Activated naive CD4-positive, alpha-beta T cell treated with anti-CD3 and anti-CD28 coated beads, Interleukin-2, amount 10 ng/mL, durations not matched to agents 7 days and 5 days (primary cell): ENCODE measurements at regions of chr20 and their contacts with region 1.

Region 1: DNA sequence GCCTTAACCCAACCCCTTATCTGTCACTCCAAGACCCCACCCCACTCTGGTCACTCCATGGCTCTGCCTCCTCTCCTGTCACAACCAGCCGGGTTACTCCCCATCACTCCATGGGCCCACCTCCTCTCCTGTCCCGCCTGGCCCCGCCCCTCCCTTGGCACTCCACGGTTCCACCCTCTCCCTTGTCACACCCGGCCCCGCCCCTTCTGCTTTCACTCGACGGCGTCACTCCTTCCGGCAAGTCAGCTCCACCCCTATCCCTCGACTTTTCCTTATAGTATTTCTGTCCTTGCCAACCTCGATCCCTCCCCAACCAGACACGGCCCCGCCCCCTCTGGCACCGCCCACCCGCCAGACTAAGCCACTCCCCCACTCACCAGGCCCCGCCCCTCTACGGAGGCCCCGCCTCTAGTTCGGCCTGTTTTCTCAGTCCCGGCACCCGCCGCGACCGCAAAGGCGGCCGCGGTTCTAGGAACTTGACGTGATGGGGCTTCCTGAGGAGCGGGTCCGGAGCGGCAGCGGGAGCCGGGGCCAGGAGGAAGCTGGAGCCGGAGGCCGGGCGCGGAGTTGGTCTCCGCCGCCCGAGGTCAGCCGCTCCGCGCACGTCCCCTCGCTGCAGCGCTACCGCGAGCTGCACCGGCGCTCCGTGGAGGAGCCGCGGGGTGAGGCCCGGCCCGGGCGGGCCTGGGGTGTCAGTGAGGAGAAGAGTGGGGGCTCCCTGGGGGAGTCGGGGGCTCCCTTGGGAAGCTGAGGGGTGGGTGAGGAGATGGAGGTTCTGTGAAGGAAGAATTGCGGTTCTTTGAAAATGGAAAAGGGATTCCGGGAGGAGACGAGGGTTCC is at the start of gene ACSS2:
- DNase-seq: peak; percentile 100
- H3K4me3 Mint-ChIP-seq: peak within 1 kb of the TSS; percentile 95
- H3K27ac Mint-ChIP-seq: peak within 1 kb of the TSS; percentile 94
- H3K4me1 Mint-ChIP-seq: peaks cover 67% of the 10 kb centered on the region
- H3K27me3 Mint-ChIP-seq: peaks cover 12% of the 10 kb centered on the region

Region 2: DNA sequence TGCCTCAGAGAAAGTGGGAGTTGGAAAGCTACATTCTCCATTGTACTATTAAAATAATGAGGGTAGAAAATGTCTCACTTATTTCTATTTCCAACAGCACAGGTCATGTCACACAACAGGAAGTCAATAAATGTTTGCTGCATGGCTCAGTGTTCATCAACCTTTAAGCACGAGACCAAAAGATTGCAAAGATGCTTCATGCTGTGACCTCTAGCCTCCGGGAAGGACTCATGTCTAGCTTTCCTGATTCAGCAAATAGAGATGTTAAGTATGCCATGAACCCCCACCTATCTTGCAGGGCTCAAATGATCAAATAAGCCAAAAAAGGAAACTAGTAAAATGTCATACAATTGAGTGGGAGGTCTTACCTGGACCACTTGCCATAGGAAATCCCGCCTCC is 108.3 kb before region 1 on chr20:
- CTCF ChIA-PET with region 1: no interaction called
- DNase-seq: no peak
- H3K4me3 Mint-ChIP-seq: no peak overlapping the region
- H3K27ac Mint-ChIP-seq: no peak overlapping the region
- H3K4me1 Mint-ChIP-seq: no peaks in the 10 kb centered on the region
- H3K27me3 Mint-ChIP-seq: no peaks in the 10 kb centered on the region

Region 3: DNA sequence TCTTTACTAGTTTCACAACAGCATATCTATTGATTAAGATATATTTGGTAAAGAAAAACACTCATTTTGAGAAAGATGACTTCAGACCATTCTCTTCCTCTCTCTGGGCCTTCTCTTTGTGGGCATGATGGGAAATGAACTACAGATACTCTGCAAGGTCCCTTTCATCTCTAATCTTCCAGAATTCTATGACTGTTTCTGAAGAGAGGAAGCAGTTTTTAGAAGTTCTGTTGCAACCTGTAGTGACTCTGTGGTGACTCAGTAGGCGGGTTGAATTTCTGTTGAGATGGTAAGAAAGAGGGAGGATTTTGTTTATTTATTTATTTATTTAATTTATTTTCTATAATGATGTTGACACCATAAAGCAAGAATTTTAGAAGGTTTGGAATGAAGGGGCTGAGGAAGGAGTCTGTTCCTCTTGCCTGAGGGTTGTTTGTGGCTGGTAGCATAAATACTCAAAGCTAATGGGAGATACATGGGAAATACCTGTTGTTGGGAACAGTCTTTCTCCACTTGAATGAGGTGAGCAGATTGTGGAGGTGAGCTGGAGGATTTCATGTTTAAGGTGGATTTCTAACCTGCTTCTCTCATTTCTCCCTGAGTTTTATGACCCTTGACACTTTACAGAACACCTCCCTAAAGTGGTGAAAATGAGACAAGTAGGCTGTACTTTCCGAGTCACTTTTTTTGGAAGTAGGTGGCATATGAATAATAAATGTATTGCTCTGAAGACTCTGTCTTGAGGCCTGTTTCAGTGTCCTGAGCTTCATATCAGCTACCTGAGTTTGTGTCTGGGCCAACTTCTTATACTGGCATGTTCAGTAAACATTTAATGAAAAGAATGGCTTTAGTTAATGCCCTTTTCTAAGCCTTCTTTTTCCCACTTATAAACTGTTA is 15.0 kb after region 1 on chr20:
- CTCF ChIA-PET with region 1: interaction called, 20 read pairs
- DNase-seq: peak; percentile 26
- H3K4me3 Mint-ChIP-seq: no peak overlapping the region
- H3K27ac Mint-ChIP-seq: peak overlapping the region; percentile 59
- H3K4me1 Mint-ChIP-seq: peaks cover 46% of the 10 kb centered on the region
- H3K27me3 Mint-ChIP-seq: no peaks in the 10 kb centered on the region

Region 4: GRCh38 chr20:34915749-34916455 is 39.5 kb after region 1 on chr20:
- CTCF ChIA-PET with region 1: interaction called, 21 read pairs
- DNase-seq: no peak
- H3K4me3 Mint-ChIP-seq: no peak overlapping the region
- H3K27ac Mint-ChIP-seq: no peak overlapping the region
- H3K4me1 Mint-ChIP-seq: peaks cover 34% of the 10 kb centered on the region
- H3K27me3 Mint-ChIP-seq: no peaks in the 10 kb centered on the region

Region 5: DNA sequence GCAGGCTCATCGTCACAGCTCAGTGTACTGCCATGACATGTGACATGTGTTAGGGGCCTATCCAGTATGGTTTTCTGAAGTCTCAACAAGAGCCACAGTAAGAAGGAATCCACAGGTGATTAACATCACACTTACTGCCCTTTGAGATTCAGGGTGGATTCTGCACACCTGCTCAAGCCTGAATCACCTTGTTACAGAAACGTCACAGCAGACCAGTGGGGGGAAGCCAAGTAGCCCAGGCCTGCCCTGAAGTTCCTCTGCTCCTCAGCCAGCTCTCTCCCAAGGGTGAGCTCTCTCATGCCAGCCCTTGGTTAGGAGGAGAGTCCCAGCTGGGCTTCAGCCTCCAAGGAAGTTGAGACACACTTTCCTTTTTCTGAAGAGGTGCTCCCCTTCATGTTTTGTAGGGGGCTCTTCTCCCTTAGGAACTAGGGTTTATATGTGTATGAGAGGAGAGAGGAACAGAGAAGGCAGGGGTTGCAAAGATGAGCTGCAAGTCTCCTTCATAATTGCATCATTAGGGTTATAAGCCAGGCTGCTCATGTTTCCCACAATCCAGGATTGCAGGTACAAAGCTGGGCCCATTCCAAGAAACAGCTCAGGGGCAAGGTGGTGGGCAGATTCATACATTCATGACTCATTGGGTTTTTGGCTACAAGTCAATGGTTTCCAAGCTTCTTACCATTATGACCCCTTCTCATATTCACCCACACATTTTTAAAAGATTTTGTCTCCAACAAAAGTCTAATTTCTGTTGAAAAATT is 67.6 kb after region 1 on chr20:
- CTCF ChIA-PET with region 1: interaction called, 12 read pairs
- DNase-seq: no peak
- H3K4me3 Mint-ChIP-seq: no peak overlapping the region
- H3K27ac Mint-ChIP-seq: no peak overlapping the region
- H3K4me1 Mint-ChIP-seq: no peaks in the 10 kb centered on the region
- H3K27me3 Mint-ChIP-seq: no peaks in the 10 kb centered on the region

Region 6: GRCh38 chr20:34955232-34956040 is 79.1 kb after region 1 on chr20 and contains the starts of genes GSS and MYH7B:
- CTCF ChIA-PET with region 1: interaction called, 134 read pairs
- DNase-seq: peak; percentile 98
- H3K4me3 Mint-ChIP-seq: peak within 1 kb of the TSS; percentile 94
- H3K27ac Mint-ChIP-seq: peak within 1 kb of the TSS; percentile 90
- H3K4me1 Mint-ChIP-seq: peaks cover 33% of the 10 kb centered on the region
- H3K27me3 Mint-ChIP-seq: peaks cover 4% of the 10 kb centered on the region

Region 7: DNA sequence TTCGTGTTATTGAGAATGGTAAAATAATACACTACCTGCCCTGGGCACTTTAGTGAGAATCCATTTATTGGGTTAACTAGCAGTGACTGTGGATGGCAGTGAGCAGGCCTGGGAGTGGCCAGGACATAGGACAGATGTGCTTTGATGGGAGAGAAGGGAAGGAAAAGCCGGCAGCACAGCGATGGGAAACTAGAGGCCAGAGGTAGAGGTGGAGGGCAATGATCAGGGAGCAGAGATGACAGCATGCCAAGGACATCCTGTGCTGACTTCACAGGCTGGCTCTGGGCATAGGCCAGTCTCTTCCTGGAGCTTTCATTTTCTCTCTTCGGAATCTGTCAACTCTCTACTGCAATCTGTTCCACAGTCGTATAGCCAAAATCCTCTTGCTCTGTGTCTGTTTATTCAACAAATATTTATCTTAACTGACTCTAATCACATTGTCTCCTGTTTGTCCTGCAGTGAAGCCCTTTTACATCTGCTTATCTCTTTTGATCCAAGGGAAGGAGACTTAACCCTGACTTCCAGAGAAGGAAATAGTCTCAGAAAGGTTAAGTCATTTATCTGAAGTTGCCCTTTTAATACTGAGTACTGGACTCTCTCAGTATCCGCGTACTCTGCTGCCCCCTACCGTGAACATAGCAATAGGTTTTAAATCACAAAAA is 331.7 kb after region 1 on chr20:
- CTCF ChIA-PET with region 1: interaction called, 16 read pairs
- DNase-seq: peak; percentile 87
- H3K4me3 Mint-ChIP-seq: no peak overlapping the region
- H3K27ac Mint-ChIP-seq: no peak overlapping the region
- H3K4me1 Mint-ChIP-seq: no peaks in the 10 kb centered on the region
- H3K27me3 Mint-ChIP-seq: no peaks in the 10 kb centered on the region